CD4-positive, alpha-beta memory T cell (primary cell): ENCODE measurements at regions of chrX and their contacts with region 1.

Region 1: DNA sequence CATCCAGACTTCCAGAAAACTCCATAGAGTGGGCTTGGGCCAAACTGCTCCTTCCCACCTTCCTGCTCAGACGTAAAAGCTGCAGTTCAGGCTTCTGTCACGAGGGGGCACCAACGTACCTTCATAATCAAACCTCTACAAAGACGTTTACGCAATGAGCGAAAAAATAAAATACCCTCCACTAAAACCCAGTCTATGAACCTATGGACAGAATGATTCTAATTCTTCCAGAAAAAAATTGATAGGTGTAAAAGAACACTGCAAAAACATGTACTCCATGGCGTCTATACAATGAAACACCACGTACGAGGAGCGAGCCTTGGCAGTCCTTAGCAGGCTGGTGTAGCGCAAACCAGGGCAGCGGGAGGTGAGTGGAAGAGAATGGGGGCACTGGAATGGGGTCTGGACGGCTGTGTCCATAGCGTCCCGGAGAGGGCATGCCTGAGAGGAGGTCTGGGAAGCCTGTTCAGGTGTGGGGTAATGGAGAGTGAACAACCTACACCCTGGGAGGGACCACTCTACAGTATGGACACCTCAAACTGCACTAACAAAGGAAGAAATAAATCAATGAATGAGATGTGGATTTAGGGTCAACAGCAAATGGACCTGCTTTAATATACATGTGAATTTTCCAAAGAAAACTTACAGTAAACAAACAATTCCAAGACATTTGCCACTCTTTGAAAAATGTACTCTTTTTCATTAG is 14.4 kb upstream of the RAB40A start:
- DNase-seq: peak; percentile 53 to 60 (median 60)
- H3K4me3 ChIP-seq: no peak overlapping the region
- H3K4me3 Mint-ChIP-seq: peak overlapping the region in 5 of 8 donors; percentile 40 to 82 (median 70)
- H3K27ac ChIP-seq: no peak overlapping the region
- H3K27ac Mint-ChIP-seq: no peak overlapping the region
- H3K4me1 ChIP-seq: peaks cover 4% of the 10 kb centered on the region
- H3K4me1 Mint-ChIP-seq: peaks cover 4% of the 10 kb centered on the region in 4 donors
- H3K27me3 ChIP-seq: no peaks in the 10 kb centered on the region
- H3K27me3 Mint-ChIP-seq: peaks cover 0 to 5% of the 10 kb centered on the region in 2 donors

Region 2: DNA sequence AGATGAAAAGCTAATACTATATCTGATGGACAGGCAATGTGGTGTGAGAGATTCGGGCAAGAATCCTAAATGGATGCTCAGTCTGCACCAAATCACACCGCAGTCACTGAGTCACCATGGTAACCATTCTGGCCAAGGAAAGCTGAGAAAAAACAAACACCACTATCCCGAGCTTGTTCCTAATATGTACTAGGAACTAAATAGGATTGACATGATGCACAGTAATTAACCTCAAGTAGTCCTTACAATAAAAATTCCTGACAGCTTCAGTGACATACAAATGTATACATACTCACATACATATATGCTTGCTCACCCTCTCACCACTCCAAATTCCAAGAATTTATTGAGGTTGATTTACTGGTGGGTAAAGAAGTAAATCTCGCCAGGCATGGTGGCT is 13.3 kb before region 1 on chrX:
- CTCF ChIA-PET with region 1: no interaction called
- POLR2A ChIA-PET with region 1: no interaction called
- intact Hi-C with region 1: no loop called
- DNase-seq: no peak
- H3K4me3 ChIP-seq: no peak overlapping the region
- H3K4me3 Mint-ChIP-seq: no peak overlapping the region
- H3K27ac ChIP-seq: no peak overlapping the region
- H3K27ac Mint-ChIP-seq: no peak overlapping the region
- H3K4me1 ChIP-seq: no peaks in the 10 kb centered on the region
- H3K4me1 Mint-ChIP-seq: no peaks in the 10 kb centered on the region
- H3K27me3 ChIP-seq: no peaks in the 10 kb centered on the region
- H3K27me3 Mint-ChIP-seq: no peaks in the 10 kb centered on the region

Region 3: GRCh38 chrX:103614992-103615391 is 81.3 kb after region 1 on chrX:
- CTCF ChIA-PET with region 1: no interaction called
- POLR2A ChIA-PET with region 1: no interaction called
- intact Hi-C with region 1: no loop called
- DNase-seq: no peak
- H3K4me3 ChIP-seq: no peak overlapping the region
- H3K4me3 Mint-ChIP-seq: no peak overlapping the region
- H3K27ac ChIP-seq: no peak overlapping the region
- H3K27ac Mint-ChIP-seq: no peak overlapping the region
- H3K4me1 ChIP-seq: no peaks in the 10 kb centered on the region
- H3K4me1 Mint-ChIP-seq: no peaks in the 10 kb centered on the region
- H3K27me3 ChIP-seq: no peaks in the 10 kb centered on the region
- H3K27me3 Mint-ChIP-seq: no peaks in the 10 kb centered on the region

Region 4: GRCh38 chrX:103711533-103712369 is 178.1 kb after region 1 on chrX:
- CTCF ChIA-PET with region 1: no interaction called
- POLR2A ChIA-PET with region 1: no interaction called
- intact Hi-C with region 1: loop called (anchors 1 kb)
- DNase-seq: peak; percentile 22 to 42 (median 36)
- H3K4me3 ChIP-seq: no peak overlapping the region
- H3K4me3 Mint-ChIP-seq: no peak overlapping the region
- H3K27ac ChIP-seq: no peak overlapping the region
- H3K27ac Mint-ChIP-seq: no peak overlapping the region
- H3K4me1 ChIP-seq: no peaks in the 10 kb centered on the region
- H3K4me1 Mint-ChIP-seq: no peaks in the 10 kb centered on the region
- H3K27me3 ChIP-seq: no peaks in the 10 kb centered on the region
- H3K27me3 Mint-ChIP-seq: peaks cover 0 to 1% of the 10 kb centered on the region in 2 donors

Region 5: GRCh38 chrX:103817502-103817901 is 283.8 kb after region 1 on chrX:
- CTCF ChIA-PET with region 1: interaction called, 11 read pairs
- POLR2A ChIA-PET with region 1: no interaction called
- intact Hi-C with region 1: no loop called
- DNase-seq: peak; percentile 14 to 60 (median 54)
- H3K4me3 ChIP-seq: no peak overlapping the region
- H3K4me3 Mint-ChIP-seq: no peak overlapping the region
- H3K27ac ChIP-seq: no peak overlapping the region
- H3K27ac Mint-ChIP-seq: no peak overlapping the region
- H3K4me1 ChIP-seq: no peaks in the 10 kb centered on the region
- H3K4me1 Mint-ChIP-seq: no peaks in the 10 kb centered on the region
- H3K27me3 ChIP-seq: no peaks in the 10 kb centered on the region
- H3K27me3 Mint-ChIP-seq: peaks cover 10% of the 10 kb centered on the region in 2 donors